Esophagus muscularis mucosa (tissue), 4 donors: ENCODE measurements at regions of chr14 and their contacts with region 1.

Region 1: GRCh38 chr14:93655078-93655750 is 133.1 kb downstream of the PRIMA1 start:
- DNase-seq: peak; percentile 21
- H3K4me3 ChIP-seq: no peak overlapping the region
- H3K27ac ChIP-seq: no peak overlapping the region
- H3K4me1 ChIP-seq: peaks cover 0 to 3% (median 0%) of the 10 kb centered on the region in 4 donors
- H3K27me3 ChIP-seq: no peaks in the 10 kb centered on the region
- CTCF ChIP-seq: peak; percentile 60 to 71 (median 68)
- EP300 ChIP-seq: no peak
- POLR2A ChIP-seq: no peak

Region 2: GRCh38 chr14:93619176-93619793 is 35.9 kb before region 1 on chr14:
- intact Hi-C with region 1: no loop called
- DNase-seq: no peak
- H3K4me3 ChIP-seq: no peak overlapping the region
- H3K27ac ChIP-seq: no peak overlapping the region
- H3K4me1 ChIP-seq: no peaks in the 10 kb centered on the region
- H3K27me3 ChIP-seq: no peaks in the 10 kb centered on the region
- CTCF ChIP-seq: peak; percentile 18 to 45 (median 33)
- EP300 ChIP-seq: no peak
- POLR2A ChIP-seq: no peak

Region 3: GRCh38 chr14:93788543-93789227 is 133.5 kb after region 1 on chr14:
- intact Hi-C with region 1: loop called (anchors 1 kb)
- DNase-seq: no peak
- H3K4me3 ChIP-seq: peak overlapping the region; percentile 68 to 84 (median 78)
- H3K27ac ChIP-seq: peak overlapping the region; percentile 91 to 94 (median 94)
- H3K4me1 ChIP-seq: peaks cover 11 to 77% (median 66%) of the 10 kb centered on the region in 4 donors
- H3K27me3 ChIP-seq: peaks cover 0 to 13% (median 0%) of the 10 kb centered on the region in 4 donors
- CTCF ChIP-seq: peak; percentile 28 to 68 (median 53)
- EP300 ChIP-seq: no peak
- POLR2A ChIP-seq: peak; percentile 46

Region 4: GRCh38 chr14:93857500-93858283 is 202.5 kb after region 1 on chr14:
- intact Hi-C with region 1: no loop called
- DNase-seq: no peak
- H3K4me3 ChIP-seq: no peak overlapping the region
- H3K27ac ChIP-seq: peak overlapping the region in 1 of 4 donors; percentile 13
- H3K4me1 ChIP-seq: peaks cover 0 to 19% (median 11%) of the 10 kb centered on the region in 4 donors
- H3K27me3 ChIP-seq: no peaks in the 10 kb centered on the region
- CTCF ChIP-seq: peak in 1 of 3 experiments; percentile 14
- EP300 ChIP-seq: no peak
- POLR2A ChIP-seq: no peak

Region 5: DNA sequence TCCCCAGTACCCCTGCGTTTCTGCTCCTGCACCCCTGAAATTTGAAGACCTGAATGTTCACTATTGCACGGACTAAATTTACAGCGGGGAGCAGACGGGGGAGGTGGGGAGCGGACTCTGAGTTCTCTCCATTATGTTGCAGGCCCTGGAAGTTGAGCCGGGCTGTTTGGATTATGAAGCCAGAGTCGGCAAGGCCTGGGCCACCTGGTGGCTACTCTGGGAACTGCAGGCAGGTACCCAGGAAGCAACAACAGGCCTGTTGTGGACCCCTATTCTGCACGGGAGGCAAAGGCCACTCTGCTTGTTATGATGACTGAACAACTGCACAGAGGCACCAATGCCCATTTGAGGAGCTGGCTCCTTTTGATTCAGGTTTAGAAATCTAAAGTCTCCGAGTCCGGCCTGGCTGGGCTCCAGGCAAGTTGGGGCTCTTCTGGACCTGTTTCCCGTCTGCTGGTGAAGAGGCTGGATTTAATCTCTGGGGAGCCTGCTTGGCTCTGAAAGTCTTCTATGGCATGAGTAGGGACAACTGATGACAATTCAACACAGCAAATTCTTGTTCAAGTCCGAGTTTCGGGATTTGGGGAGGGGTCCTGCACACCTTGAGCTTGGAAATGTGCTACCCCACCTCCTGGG is 237.8 kb after region 1 on chr14:
- intact Hi-C with region 1: loop called (anchors 2 kb)
- DNase-seq: peak; percentile 95
- H3K4me3 ChIP-seq: no peak overlapping the region
- H3K27ac ChIP-seq: peak overlapping the region in 3 of 4 donors; percentile 29 to 50 (median 32)
- H3K4me1 ChIP-seq: peaks cover 12 to 21% (median 17%) of the 10 kb centered on the region in 4 donors
- H3K27me3 ChIP-seq: no peaks in the 10 kb centered on the region
- CTCF ChIP-seq: peak; percentile 95 to 98 (median 98)
- EP300 ChIP-seq: no peak
- POLR2A ChIP-seq: no peak

Region 6: GRCh38 chr14:93906341-93907329 is 251.4 kb after region 1 on chr14:
- intact Hi-C with region 1: loop called (anchors 5 kb)
- DNase-seq: no peak
- H3K4me3 ChIP-seq: no peak overlapping the region
- H3K27ac ChIP-seq: no peak overlapping the region
- H3K4me1 ChIP-seq: peaks cover 0 to 6% (median 0%) of the 10 kb centered on the region in 4 donors
- H3K27me3 ChIP-seq: peaks cover 0 to 14% (median 0%) of the 10 kb centered on the region in 4 donors
- CTCF ChIP-seq: peak; percentile 65 to 82 (median 69)
- EP300 ChIP-seq: no peak
- POLR2A ChIP-seq: no peak

Region 7: DNA sequence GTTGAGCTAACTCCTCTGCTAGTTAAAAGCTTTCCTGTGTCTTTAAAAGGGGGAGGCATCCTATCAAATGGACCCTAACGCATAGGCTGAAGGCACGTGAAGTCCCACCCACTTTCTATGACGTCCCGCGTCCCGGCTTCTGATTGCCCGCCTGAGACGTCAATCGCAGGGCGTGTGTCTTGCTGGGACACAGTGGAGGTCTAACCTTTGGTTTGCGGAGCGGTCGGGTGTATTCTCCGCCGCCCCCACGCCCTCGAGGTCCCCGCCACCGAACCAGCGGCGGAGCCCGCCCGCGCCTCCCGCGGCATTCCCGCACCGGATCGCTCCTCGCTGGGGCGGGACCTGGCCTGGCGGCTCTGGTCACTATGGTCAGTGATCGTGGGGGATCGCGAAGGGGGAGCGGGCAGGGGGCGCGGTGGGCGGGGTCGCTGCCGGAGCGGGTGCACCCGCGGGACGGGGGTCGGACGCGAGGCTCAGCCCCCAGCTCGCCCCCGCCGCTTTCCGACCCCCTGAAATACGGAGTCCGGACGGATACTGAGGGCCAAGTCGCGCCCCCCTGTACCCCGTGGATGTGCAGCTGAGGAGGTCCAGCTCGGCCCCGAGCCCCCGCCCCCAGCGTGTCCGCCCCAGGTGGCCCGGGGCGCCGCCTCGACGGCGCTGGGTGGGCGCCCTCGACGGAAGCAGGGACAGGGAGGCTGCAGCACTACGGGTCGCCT is 371.1 kb after region 1 on chr14 and contains the start of gene OTUB2:
- intact Hi-C with region 1: loop called (anchors 10 kb)
- DNase-seq: peak; percentile 100
- H3K4me3 ChIP-seq: peak within 1 kb of the TSS; percentile 61 to 80 (median 74)
- H3K27ac ChIP-seq: peak within 1 kb of the TSS in 1 of 4 donors; percentile 49
- H3K4me1 ChIP-seq: peaks cover 4 to 18% (median 14%) of the 10 kb centered on the region in 4 donors
- H3K27me3 ChIP-seq: no peaks in the 10 kb centered on the region
- CTCF ChIP-seq: no peak
- EP300 ChIP-seq: no peak
- POLR2A ChIP-seq: no peak
- total RNA-seq, gene OTUB2: 0.42 to 0.63 (median 0.52) TPM in 3 of 4 donors, not detected in the other